Activated B cell treated with CpG ODN at 0.5 μM for 24 hours (primary cell): ENCODE measurements at regions of chr4 and their contacts with region 1.

Region 1: GRCh38 chr4:139015269-139015947 is at the start of gene NOCT:
- DNase-seq: peak; percentile 86
- ATAC-seq: peak; percentile 91
- H3K4me3 Mint-ChIP-seq: peak within 1 kb of the TSS; percentile 92
- H3K27ac Mint-ChIP-seq: peak within 1 kb of the TSS; percentile 99
- H3K4me1 Mint-ChIP-seq: peaks cover 32% of the 10 kb centered on the region
- H3K27me3 Mint-ChIP-seq: no peaks in the 10 kb centered on the region
- CTCF ChIP-seq: no peak
- total RNA-seq, gene NOCT: 9.1 and 9.4 TPM in 2 replicates

Region 2: GRCh38 chr4:138903185-138903584 is 112.2 kb before region 1 on chr4:
- CTCF ChIA-PET with region 1: no interaction called
- POLR2A ChIA-PET with region 1: interaction called, 11 read pairs
- intact Hi-C with region 1: no loop called
- DNase-seq: no peak
- ATAC-seq: no peak
- H3K4me3 Mint-ChIP-seq: no peak overlapping the region
- H3K27ac Mint-ChIP-seq: no peak overlapping the region
- H3K4me1 Mint-ChIP-seq: no peaks in the 10 kb centered on the region
- H3K27me3 Mint-ChIP-seq: no peaks in the 10 kb centered on the region
- CTCF ChIP-seq: no peak

Region 3: DNA sequence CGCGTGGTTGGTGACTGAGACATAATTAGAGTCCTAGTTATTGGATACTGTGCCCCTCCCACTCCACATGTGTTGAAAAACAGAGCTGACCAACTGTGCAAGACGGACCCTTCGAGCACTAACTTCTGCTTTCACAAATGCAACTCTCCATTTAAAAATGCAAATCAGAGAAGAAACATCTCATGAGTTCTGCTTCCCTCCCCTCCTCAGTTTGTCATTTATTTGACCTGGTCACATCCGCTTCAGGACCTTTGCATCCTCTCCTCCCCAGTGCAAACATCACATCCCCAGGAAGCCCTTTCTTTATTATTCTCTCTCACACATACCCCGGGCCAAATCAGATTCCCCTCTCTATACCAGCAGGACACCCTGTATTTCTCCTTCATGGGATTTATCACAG is 37.9 kb before region 1 on chr4:
- CTCF ChIA-PET with region 1: no interaction called
- POLR2A ChIA-PET with region 1: interaction called, 16 read pairs
- intact Hi-C with region 1: loop called (anchors 1 kb)
- DNase-seq: no peak
- ATAC-seq: peak; percentile 93
- H3K4me3 Mint-ChIP-seq: peak overlapping the region; percentile 56
- H3K27ac Mint-ChIP-seq: peak overlapping the region; percentile 83
- H3K4me1 Mint-ChIP-seq: peaks cover 25% of the 10 kb centered on the region
- H3K27me3 Mint-ChIP-seq: no peaks in the 10 kb centered on the region
- CTCF ChIP-seq: no peak

Region 4: DNA sequence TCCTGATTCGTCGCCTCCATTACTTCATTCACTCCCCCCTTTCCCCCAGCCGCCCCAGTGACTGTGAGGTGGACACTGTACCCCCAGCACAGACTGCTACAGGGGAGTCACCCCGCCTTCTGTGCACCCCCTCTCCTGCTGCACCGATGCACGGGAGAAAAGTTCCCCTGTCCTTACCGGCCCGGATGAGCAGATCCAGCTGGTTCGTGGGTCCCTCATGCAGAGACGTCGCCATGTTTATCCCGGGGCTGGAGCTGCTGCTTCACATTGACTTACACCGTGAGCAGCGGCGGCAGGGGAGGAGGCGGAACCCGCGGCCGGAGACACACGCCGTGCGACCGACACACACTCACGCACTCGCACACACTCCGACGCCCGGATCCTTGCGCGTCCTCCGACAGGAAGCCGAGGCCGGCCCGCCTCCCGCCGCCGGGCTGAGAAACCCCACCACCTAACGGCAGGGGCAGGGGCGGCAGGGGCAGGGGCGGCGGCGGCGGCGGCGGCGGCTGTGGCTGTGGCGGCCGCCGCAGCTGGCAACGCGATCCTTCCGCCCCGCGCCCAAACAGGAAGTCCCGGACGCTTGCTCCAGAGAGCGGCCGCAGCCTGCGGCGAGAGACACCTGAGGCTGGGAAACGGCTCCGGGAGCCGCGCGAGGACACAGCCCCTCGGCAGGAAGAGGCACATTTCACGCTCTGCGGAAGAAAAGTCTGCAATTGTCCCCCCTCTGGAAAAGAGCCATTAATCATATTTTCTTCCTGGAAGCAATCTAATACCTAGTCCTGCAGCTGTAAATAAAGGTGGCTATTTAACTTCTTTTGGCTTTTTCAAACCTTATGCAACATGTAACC is 68.8 kb after region 1 on chr4:
- CTCF ChIA-PET with region 1: no interaction called
- POLR2A ChIA-PET with region 1: interaction called, 26 read pairs
- intact Hi-C with region 1: loop called (anchors 1 kb)
- DNase-seq: peak; percentile 79
- ATAC-seq: peak; percentile 66
- H3K4me3 Mint-ChIP-seq: peak overlapping the region; percentile 99
- H3K27ac Mint-ChIP-seq: peak overlapping the region; percentile 99
- H3K4me1 Mint-ChIP-seq: peaks cover 38% of the 10 kb centered on the region
- H3K27me3 Mint-ChIP-seq: no peaks in the 10 kb centered on the region
- CTCF ChIP-seq: no peak

Region 5: GRCh38 chr4:139301113-139301820 is 285.9 kb after region 1 on chr4 and contains the start of gene NAA15:
- CTCF ChIA-PET with region 1: no interaction called
- POLR2A ChIA-PET with region 1: interaction called, 9 read pairs
- intact Hi-C with region 1: loop called (anchors 1 kb)
- DNase-seq: peak; percentile 93
- ATAC-seq: peak; percentile 91
- H3K4me3 Mint-ChIP-seq: peak within 1 kb of the TSS; percentile 99
- H3K27ac Mint-ChIP-seq: peak within 1 kb of the TSS; percentile 98
- H3K4me1 Mint-ChIP-seq: peaks cover 49% of the 10 kb centered on the region
- H3K27me3 Mint-ChIP-seq: no peaks in the 10 kb centered on the region
- CTCF ChIP-seq: no peak
- total RNA-seq, gene NAA15: 62.6 and 66.5 TPM in 2 replicates

Region 6: DNA sequence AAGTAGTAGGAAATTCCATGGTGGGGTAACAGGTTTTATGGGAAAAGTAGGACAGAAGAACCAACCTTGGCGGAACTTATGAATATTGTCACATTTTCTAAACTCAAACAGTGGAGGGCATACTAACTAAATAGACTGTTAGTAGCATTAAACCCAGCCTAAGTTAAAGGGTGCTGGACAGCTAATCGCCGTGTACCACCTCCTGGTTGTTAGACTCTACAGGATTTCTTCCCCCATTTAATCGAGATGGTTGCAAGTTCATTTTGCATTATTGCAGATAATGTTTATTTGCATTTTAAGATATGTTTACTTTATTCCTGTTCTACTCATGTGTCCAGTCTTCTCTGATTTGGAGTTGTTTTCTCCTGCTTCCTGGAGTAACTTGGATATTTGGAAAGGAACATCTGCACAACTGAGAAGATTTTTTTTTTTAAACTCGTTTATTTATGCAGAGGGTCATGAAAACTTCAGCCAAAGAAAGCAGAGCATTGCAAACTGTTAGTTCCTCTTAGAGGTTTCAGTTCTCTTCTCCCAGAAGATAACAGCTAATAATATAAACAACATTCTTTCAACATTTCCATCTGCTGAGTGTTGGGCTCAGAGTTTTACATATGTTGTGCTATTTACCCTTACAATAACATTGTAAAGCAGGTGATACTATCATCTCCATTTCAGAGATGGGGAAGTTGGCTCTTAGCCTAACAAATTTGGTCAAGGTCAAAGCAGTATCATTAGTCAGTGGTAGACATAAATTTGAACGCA is 1792.3 kb after region 1 on chr4:
- CTCF ChIA-PET with region 1: no interaction called
- POLR2A ChIA-PET with region 1: no interaction called
- intact Hi-C with region 1: loop called (anchors 10 kb)
- DNase-seq: no peak
- ATAC-seq: peak; percentile 78
- H3K4me3 Mint-ChIP-seq: peak overlapping the region; percentile 72
- H3K27ac Mint-ChIP-seq: peak overlapping the region; percentile 93
- H3K4me1 Mint-ChIP-seq: peaks cover 89% of the 10 kb centered on the region
- H3K27me3 Mint-ChIP-seq: no peaks in the 10 kb centered on the region
- CTCF ChIP-seq: no peak